Activated CD4-positive, alpha-beta memory T cell treated with anti-CD3 and anti-CD28 coated beads, Interleukin-2, amount 10 ng/mL, durations not matched to agents 7 days and 5 days (primary cell): ENCODE measurements at regions of chr3 and their contacts with region 1.

Region 1: GRCh38 chr3:4736284-4736861 is 242.9 kb upstream of the BHLHE40 start:
- DNase-seq: no peak
- H3K4me3 Mint-ChIP-seq: peak overlapping the region; percentile 14
- H3K27ac Mint-ChIP-seq: peak overlapping the region; percentile 87
- H3K4me1 Mint-ChIP-seq: peaks cover 82% of the 10 kb centered on the region
- H3K27me3 Mint-ChIP-seq: no peaks in the 10 kb centered on the region

Region 2: DNA sequence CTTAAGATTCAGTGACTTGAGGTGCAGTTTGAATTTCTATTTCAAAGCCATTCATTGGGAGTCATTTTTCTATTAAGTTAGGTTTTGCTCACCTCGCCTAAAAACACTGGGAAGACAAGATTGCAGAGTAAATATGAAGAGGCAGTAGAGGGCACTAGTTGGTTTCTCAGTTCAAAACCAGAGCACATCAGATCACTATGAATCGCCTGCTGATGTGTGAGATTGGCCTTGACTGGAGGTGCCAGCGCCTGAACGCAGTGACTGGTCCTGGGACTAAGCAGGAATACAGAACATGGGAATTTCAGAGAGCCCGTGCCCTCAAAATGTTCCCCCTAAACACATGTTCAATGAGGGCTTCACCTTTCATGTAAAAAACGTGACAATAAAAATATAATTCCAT is 14.3 kb before region 1 on chr3:
- CTCF ChIA-PET with region 1: interaction called, 11 read pairs
- POLR2A ChIA-PET with region 1: interaction called, 8 read pairs
- DNase-seq: peak; percentile 45
- H3K4me3 Mint-ChIP-seq: no peak overlapping the region
- H3K27ac Mint-ChIP-seq: peak overlapping the region; percentile 50
- H3K4me1 Mint-ChIP-seq: peaks cover 50% of the 10 kb centered on the region
- H3K27me3 Mint-ChIP-seq: no peaks in the 10 kb centered on the region

Region 3: DNA sequence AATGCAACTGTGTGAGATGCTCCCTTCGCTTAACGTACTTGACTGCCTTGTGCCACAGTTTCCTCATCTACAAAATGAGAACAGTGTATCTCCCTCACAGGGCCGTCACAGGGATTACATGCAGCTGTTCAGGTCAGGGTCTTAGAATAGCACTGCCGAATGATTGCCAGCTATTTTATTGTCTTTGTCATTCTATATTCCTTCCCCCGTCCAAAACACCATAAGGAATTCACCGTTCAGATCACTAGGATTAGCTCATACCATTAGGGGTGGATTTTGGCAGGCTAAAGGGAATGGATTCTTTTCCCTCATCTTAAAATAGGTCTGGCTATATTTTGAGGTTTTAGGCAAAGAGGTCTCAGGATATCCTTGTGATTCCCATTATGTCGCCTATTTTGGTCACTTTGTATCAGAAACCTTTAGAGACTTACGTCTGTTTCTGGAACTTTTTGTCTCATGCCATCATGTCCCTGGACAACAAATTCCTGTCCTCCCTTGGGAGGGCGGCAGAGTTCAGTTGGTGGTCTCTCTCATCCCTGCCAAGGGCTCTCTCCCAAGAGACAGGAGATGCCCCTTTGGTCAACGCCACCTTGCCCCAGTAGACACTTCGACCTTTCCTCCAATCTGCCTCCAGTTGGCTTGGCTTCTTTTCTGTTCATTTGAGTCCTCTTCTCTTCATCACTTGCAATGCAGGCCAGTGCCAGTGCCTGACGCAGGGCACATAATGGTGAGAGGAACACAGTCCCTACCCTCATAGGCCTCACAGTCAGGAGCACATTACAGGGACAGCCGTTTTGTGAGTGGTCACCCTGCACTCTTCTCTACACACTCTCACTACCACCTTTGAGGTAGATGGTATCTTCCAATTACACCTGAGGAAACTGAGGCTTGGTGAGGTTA is 71.3 kb after region 1 on chr3:
- CTCF ChIA-PET with region 1: interaction called, 3 read pairs
- POLR2A ChIA-PET with region 1: interaction called, 12 read pairs
- DNase-seq: no peak
- H3K4me3 Mint-ChIP-seq: peak overlapping the region; percentile 21
- H3K27ac Mint-ChIP-seq: peak overlapping the region; percentile 26
- H3K4me1 Mint-ChIP-seq: peaks cover 72% of the 10 kb centered on the region
- H3K27me3 Mint-ChIP-seq: no peaks in the 10 kb centered on the region

Region 4: GRCh38 chr3:4826237-4827100 is 90.1 kb after region 1 on chr3:
- CTCF ChIA-PET with region 1: interaction called, 5 read pairs
- POLR2A ChIA-PET with region 1: interaction called, 28 read pairs
- DNase-seq: no peak
- H3K4me3 Mint-ChIP-seq: peak overlapping the region; percentile 83
- H3K27ac Mint-ChIP-seq: peak overlapping the region; percentile 93
- H3K4me1 Mint-ChIP-seq: peaks cover 94% of the 10 kb centered on the region
- H3K27me3 Mint-ChIP-seq: no peaks in the 10 kb centered on the region

Region 5: GRCh38 chr3:4834403-4834866 is 98.1 kb after region 1 on chr3:
- CTCF ChIA-PET with region 1: no interaction called
- POLR2A ChIA-PET with region 1: interaction called, 21 read pairs
- DNase-seq: peak; percentile 88
- H3K4me3 Mint-ChIP-seq: peak overlapping the region; percentile 69
- H3K27ac Mint-ChIP-seq: peak overlapping the region; percentile 93
- H3K4me1 Mint-ChIP-seq: peaks cover 87% of the 10 kb centered on the region
- H3K27me3 Mint-ChIP-seq: no peaks in the 10 kb centered on the region

Region 6: GRCh38 chr3:4850211-4850927 is 114.0 kb after region 1 on chr3:
- CTCF ChIA-PET with region 1: no interaction called
- POLR2A ChIA-PET with region 1: interaction called, 13 read pairs
- DNase-seq: peak; percentile 69
- H3K4me3 Mint-ChIP-seq: peak overlapping the region; percentile 38
- H3K27ac Mint-ChIP-seq: peak overlapping the region; percentile 94
- H3K4me1 Mint-ChIP-seq: peaks cover 90% of the 10 kb centered on the region
- H3K27me3 Mint-ChIP-seq: no peaks in the 10 kb centered on the region